Posterior vena cava (tissue), 2 donors: ENCODE measurements at regions of chr10 and their contacts with region 1.

Region 1: GRCh38 chr10:29735596-29736318 is 101.0 kb upstream of the SVIL start:
- DNase-seq: peak; percentile 96

Region 2: GRCh38 chr10:29635711-29636144 is 100.0 kb before region 1 on chr10:
- intact Hi-C with region 1: loop called in 1 of 2 experiments (anchors 10 kb)
- DNase-seq: no peak

Region 3: DNA sequence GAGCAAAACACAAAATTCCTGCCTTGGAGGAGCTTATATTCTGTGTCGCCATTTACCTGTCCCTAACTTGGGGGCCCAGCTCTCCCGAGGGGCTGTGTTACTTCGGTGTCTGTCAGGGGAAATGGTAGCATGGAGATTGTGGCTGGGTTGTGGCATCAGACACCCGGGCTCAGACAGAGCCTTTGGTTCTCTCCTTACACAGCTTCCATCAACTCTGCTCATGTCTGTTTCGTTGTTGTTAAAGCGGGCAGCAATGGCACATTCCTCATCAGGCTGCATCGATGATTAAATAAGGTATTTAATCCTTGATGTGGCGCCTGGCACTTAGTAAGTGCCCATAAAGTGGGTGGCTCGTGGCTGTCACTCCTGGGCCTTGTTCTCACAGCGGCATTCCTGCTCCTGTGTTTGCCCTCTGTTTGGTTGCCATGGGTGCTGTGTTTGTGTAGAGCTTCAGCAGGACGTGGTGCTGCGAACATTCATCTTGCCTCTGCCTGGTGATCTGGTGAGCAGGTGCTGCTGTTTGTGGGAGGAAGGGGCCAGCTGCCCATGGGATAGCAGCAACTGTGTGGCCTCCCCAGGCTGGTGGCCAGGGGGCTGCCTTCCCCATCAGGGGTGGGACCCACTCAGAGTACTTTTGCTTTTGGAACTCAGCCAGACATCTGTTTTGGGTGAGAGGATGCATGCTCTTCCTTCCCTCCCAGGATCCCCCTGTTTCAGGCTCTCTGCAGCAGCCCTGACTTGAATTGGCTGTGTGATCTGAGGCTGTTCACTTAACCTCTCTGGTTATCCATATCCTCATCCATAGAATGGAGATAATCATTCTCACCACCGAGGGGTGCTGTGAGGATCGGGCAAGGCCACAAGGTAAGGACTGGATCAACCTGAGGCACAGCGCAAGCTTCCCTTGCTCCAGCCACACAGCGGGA is 106.2 kb after region 1 on chr10:
- intact Hi-C with region 1: loop called in 1 of 2 experiments (anchors 10 kb)
- DNase-seq: no peak

Region 4: GRCh38 chr10:29857843-29858701 is 122.3 kb after region 1 on chr10:
- intact Hi-C with region 1: loop called in 1 of 2 experiments (anchors 5 kb)
- DNase-seq: peak; percentile 85